OCI-LY7 (cell line): ENCODE measurements at regions of chr9 and their contacts with region 1.

Region 1: GRCh38 chr9:123234853-123235252 is 33.5 kb downstream of the STRBP start:
- DNase-seq: peak; percentile 81
- H3K4me3 ChIP-seq: peak overlapping the region; percentile 39
- H3K27ac ChIP-seq: peak overlapping the region; percentile 88
- H3K4me1 ChIP-seq: peaks cover 93% of the 10 kb centered on the region
- CTCF ChIP-seq: no peak

Region 2: GRCh38 chr9:123174887-123175518 is 59.9 kb before region 1 on chr9:
- CTCF ChIA-PET with region 1: no interaction called
- POLR2A ChIA-PET with region 1: interaction called, 6 read pairs
- intact Hi-C with region 1: loop called (anchors 2 kb)
- DNase-seq: peak; percentile 93
- H3K4me3 ChIP-seq: peak overlapping the region; percentile 55
- H3K27ac ChIP-seq: peak overlapping the region; percentile 99
- H3K4me1 ChIP-seq: peaks cover 99% of the 10 kb centered on the region
- CTCF ChIP-seq: no peak

Region 3: DNA sequence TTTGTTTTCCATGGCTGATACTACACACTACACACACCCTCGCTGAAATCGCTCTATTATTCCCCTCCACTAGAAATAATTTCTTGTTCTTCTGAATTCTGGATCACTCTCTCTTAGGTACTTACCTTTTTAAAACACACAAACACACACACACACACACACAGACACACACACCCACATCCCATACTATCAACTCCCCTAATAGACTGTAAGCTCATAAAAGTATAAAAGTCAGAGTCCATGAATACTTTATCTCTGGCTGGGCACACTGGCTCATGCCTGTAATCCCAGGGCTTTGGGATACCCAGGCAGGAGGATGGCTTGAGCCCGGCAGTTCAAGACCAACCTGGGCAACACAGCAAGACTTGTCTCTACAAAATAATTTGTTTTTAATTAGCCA is 22.4 kb after region 1 on chr9:
- CTCF ChIA-PET with region 1: interaction called, 3 read pairs
- POLR2A ChIA-PET with region 1: interaction called, 31 read pairs
- intact Hi-C with region 1: no loop called
- DNase-seq: no peak
- H3K4me3 ChIP-seq: no peak overlapping the region
- H3K27ac ChIP-seq: no peak overlapping the region
- H3K4me1 ChIP-seq: peaks cover 45% of the 10 kb centered on the region
- CTCF ChIP-seq: no peak

Region 4: GRCh38 chr9:123268240-123268949 is 33.5 kb after region 1 on chr9 and contains the start of gene STRBP:
- CTCF ChIA-PET with region 1: interaction called, 4 read pairs
- POLR2A ChIA-PET with region 1: interaction called, 31 read pairs
- intact Hi-C with region 1: loop called (anchors 2 kb)
- DNase-seq: peak; percentile 97
- H3K4me3 ChIP-seq: peak within 1 kb of the TSS; percentile 98
- H3K27ac ChIP-seq: peak within 1 kb of the TSS; percentile 42
- H3K4me1 ChIP-seq: peaks cover 51% of the 10 kb centered on the region
- CTCF ChIP-seq: no peak
- total RNA-seq, gene STRBP: 82.8 and 96.0 TPM in 2 replicates

Region 5: GRCh38 chr9:123338710-123339665 is 104.1 kb after region 1 on chr9:
- CTCF ChIA-PET with region 1: interaction called, 3 read pairs
- POLR2A ChIA-PET with region 1: interaction called, 13 read pairs
- intact Hi-C with region 1: loop called (anchors 2 kb)
- DNase-seq: peak; percentile 89
- H3K4me3 ChIP-seq: peak overlapping the region; percentile 59
- H3K27ac ChIP-seq: peak overlapping the region; percentile 93
- H3K4me1 ChIP-seq: peaks cover 97% of the 10 kb centered on the region
- CTCF ChIP-seq: no peak